Activated T-helper 2 cell treated with anti-CD3 and anti-CD28 coated beads, Interferon-gamma antibody, Interleukin-2, Interleukin-4, amounts not matched to agents 10 μg/mL and 5 μg/mL and 100 μg/mL, durations not matched to agents 14 hours and 24 hours and 36 hours (primary cell): ENCODE measurements at regions of chr15 and their contacts with region 1.

Region 1: DNA sequence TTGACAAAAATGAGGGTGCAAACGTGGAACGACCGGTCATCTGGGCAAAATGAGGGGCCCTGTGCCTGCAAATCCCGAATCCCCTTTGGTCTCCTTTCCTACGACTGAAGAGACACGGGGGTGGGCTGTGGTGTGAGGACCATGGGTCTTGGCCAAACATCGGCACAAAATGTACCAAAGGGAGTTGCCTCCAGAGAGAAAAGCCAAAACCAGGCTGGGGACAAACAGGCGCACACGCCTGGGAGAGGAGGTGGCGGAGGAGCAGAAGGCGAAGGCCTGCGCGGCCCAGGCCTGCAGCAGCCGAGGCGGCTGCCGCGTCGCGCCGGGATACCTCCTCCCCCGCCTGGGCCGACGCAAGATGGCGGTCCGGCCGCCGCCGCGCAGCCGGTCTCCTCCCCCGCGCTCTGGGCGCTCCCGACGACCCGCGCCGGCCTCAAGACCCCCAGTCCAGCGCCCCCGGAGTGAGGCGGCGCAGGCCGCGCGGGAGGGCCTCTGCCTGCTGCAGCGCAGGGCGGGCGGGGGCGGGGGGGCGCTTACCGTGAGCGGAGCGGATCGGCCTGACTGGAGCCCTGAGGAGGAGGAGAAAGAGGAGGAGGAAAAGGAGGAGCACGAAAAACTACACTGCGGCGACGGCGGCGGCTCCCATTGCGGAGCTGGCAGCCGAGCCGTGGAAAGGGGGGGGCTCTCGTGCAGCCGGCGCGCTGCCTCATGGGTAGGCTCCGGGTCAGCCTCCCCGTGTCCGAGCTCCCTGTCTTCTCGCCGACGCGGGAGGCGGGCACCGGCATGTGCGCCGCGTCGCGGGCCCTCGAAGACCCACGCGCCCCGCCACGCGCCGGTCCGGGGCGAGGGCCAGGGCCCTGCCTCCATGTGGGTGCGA is at the start of gene ZNF280D:
- DNase-seq: peak; percentile 76
- H3K4me3 Mint-ChIP-seq: peak within 1 kb of the TSS; percentile 88
- H3K27ac Mint-ChIP-seq: peak within 1 kb of the TSS; percentile 90
- H3K4me1 Mint-ChIP-seq: peaks cover 24% of the 10 kb centered on the region
- H3K27me3 Mint-ChIP-seq: no peaks in the 10 kb centered on the region
- total RNA-seq, gene ZNF280D: 24.0 and 26.0 TPM in 2 replicates

Region 2: DNA sequence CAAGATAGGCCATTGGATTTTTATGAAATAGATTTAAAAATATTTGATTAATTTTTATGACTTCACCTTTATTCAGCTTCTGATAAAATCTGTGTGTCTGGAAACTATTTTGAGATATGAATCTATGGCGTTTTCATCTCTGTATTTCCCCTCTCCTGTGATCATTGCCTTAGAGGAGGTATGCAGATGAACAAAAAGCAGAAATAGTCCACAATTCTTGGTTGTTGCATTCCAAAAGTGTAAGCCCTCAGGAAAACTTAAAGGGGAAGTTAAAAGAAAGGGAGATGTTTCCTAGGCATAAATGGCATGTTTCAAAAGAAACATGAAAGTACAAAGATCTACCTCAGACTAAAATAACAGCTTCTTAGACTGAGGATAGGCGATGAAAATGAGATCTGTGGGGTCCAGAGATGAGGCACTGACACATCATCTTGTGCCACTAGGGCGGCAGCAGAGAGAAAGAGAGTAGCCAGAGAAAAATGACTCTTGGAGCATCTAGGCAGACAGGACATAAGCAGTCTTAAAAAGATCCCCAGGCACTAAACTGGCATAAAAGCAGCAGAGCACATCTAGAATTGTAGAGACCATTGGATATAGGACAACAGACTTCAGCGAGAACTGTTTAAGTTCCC is 447.1 kb before region 1 on chr15:
- intact Hi-C with region 1: no loop called
- DNase-seq: no peak
- H3K4me3 Mint-ChIP-seq: no peak overlapping the region
- H3K27ac Mint-ChIP-seq: no peak overlapping the region
- H3K4me1 Mint-ChIP-seq: no peaks in the 10 kb centered on the region
- H3K27me3 Mint-ChIP-seq: peaks cover 5% of the 10 kb centered on the region

Region 3: DNA sequence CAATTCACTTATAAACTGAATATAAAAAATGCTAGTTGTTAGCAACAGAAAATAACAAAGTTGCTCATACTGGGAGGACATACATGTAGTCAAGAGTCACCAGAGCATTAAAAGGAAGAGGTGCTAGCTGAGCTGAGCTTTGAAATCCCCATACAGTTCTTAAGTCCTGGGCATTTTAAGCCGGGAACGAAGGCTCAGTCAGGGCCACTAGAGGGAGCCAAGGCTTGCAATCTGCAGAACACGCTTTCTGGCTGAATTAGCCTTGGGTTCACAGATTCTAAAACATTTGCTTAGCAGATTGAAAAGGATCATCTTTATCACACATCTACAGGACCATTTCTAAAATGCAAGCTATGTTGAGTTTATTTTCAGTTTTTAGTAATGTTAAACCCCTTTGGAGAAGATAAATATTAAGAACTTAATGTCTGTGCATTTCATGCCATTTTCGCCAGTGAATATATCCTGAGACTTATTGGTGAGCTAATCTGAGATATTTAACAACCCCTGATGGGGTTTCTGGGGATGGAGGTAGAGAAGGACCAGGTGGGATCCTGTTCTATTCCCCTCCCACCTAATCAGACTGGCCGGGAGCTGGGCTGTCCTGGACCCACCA is 241.9 kb before region 1 on chr15:
- intact Hi-C with region 1: loop called (anchors 10 kb)
- DNase-seq: peak; percentile 33
- H3K4me3 Mint-ChIP-seq: no peak overlapping the region
- H3K27ac Mint-ChIP-seq: no peak overlapping the region
- H3K4me1 Mint-ChIP-seq: peaks cover 6% of the 10 kb centered on the region
- H3K27me3 Mint-ChIP-seq: peaks cover 11% of the 10 kb centered on the region

Region 4: DNA sequence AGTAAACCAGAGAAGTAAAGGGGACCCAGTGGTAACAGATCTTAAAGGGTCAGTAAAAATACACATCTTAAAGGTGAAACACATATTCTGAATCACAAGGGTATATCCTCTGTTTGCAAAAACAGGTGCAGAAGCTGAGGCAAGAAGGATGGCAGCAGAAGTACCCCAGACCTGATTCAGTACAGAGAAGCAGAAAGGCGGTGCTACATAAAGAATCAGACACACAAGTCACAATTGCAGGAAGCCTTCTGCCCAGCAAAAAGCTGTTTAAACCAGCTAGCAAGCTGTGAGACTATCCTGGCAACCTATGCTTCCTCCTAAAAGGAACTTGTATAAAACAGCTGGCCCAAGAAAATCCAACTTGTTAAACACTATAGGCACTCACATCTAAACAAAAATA is 49.3 kb before region 1 on chr15:
- intact Hi-C with region 1: no loop called
- DNase-seq: no peak
- H3K4me3 Mint-ChIP-seq: no peak overlapping the region
- H3K27ac Mint-ChIP-seq: no peak overlapping the region
- H3K4me1 Mint-ChIP-seq: no peaks in the 10 kb centered on the region
- H3K27me3 Mint-ChIP-seq: no peaks in the 10 kb centered on the region

Region 5: DNA sequence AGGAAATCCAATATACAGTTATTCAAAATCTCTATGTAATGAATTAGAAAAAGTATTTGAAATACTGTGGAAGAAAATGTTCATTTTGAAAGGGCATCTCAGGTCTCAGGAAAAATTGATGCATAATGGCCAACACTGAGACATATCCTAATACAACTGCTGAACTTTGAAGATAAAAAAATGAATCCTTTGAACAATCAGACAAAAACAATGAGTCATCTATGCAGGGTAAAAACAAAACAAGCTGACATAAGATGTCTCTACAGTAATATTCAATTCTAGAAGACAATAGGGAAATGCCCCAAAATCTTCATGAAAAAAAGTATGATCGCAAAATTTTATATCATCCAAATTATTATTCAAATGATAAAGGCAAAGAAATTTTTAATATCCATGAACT is 34.2 kb after region 1 on chr15:
- intact Hi-C with region 1: loop called (anchors 2 kb)
- DNase-seq: no peak
- H3K4me3 Mint-ChIP-seq: no peak overlapping the region
- H3K27ac Mint-ChIP-seq: peak overlapping the region; percentile 81
- H3K4me1 Mint-ChIP-seq: peaks cover 32% of the 10 kb centered on the region
- H3K27me3 Mint-ChIP-seq: no peaks in the 10 kb centered on the region

Region 6: DNA sequence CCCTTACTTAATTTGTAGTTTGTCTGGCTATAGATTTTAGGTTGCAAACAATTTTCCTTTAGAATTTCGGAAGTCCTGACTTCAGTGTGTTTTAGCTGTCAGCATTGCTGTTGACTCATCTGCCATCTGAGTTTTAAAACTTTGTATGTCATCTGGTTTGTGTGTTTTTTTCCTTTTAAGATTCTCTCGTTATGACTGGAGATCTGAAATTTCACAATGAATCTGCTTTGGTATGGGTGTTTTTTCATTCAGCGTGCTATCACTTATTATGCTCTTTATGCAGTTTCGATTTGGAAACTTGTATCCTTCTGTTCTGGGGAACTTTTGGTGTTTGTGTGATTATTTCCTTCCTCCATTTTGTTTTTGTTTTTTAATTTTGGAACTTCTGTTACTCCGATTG is 53.8 kb after region 1 on chr15:
- intact Hi-C with region 1: loop called (anchors 5 kb)
- DNase-seq: no peak
- H3K4me3 Mint-ChIP-seq: no peak overlapping the region
- H3K27ac Mint-ChIP-seq: peak overlapping the region; percentile 70
- H3K4me1 Mint-ChIP-seq: peaks cover 16% of the 10 kb centered on the region
- H3K27me3 Mint-ChIP-seq: no peaks in the 10 kb centered on the region

Region 7: DNA sequence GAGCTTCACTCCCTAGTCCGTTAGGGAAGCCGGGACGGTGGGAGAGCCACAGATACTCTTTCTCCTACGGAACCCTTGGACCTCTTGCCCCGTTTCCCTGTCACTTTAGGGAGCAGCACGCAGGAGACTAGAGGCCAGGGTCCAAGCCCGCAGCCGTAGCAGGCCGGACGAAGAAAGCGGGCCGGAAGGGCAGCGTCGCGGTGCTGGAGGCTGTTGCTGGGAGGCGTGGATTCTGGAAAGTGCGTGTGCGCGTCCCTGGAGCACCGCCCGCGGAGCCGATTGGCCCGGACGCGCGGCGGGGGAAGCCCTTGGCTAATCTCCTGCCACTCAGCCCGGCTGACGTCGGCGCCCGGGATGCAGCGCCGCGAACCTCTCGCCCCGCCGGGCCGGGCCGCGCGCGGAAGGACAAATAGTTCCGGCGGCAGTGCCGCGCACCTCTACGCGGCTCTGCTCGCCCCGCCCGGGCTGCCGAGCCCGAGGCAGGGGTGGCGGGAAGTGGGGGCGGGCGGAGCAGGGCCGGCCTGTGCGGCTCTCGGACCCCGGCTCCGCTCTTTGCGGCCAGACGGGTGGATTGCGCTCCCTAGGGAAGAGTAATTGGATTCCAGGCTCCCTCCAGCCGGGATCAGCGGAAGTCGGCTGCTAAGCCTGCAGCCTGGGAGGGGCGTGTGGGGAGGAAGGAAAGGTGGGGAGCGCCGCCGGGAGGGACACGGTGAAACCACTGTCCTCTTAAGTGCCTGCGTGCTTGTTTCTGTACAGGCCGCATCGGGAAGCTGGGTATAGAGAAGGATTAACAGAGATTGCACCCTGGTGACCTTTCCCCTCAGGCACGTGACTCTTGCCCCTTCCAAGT is 154.0 kb after region 1 on chr15:
- intact Hi-C with region 1: loop called (anchors 2 kb)
- DNase-seq: peak; percentile 78
- H3K4me3 Mint-ChIP-seq: peak overlapping the region; percentile 77
- H3K27ac Mint-ChIP-seq: peak overlapping the region; percentile 34
- H3K4me1 Mint-ChIP-seq: peaks cover 19% of the 10 kb centered on the region
- H3K27me3 Mint-ChIP-seq: peaks cover 9% of the 10 kb centered on the region